ENCODE measurements at regions of chr4 and their contacts with region 1.

Region 1: GRCh38 chr4:4488405-4489404 is 53.1 kb downstream of the STX18 start:
- DNase-seq: peak; percentile 39 to 90 (median 78)

Region 2: GRCh38 chr4:4539481-4539880 is 50.8 kb after region 1 on chr4:
- intact Hi-C with region 1: loop called (anchors 2 kb)
- DNase-seq: no peak

Region 3: GRCh38 chr4:4585012-4585670 is 96.4 kb after region 1 on chr4:
- intact Hi-C with region 1: no loop called
- DNase-seq: no peak

Region 4: GRCh38 chr4:4880492-4880891 is 391.8 kb after region 1 on chr4:
- intact Hi-C with region 1: loop called (anchors 5 kb)
- DNase-seq: no peak

Measured in head of caudate nucleus (tissue), 42 donors.